ENCODE measurements at regions of chr10 and their contacts with region 1.

Region 1: GRCh38 chr10:95544783-95545500 is 16.2 kb downstream of the SORBS1 start:
- DNase-seq: no peak
- ATAC-seq: peak in 4 of 8 donors; percentile 13 to 36 (median 18)
- H3K4me3 ChIP-seq: peak overlapping the region in 1 of 10 donors; percentile 3
- H3K27ac ChIP-seq: peak overlapping the region; percentile 61 to 92 (median 89)
- H3K4me1 ChIP-seq: peaks cover 24 to 100% (median 88%) of the 10 kb centered on the region in 9 donors
- H3K27me3 ChIP-seq: no peaks in the 10 kb centered on the region
- CTCF ChIP-seq: no peak

Region 2: GRCh38 chr10:95049919-95050318 is 495.0 kb before region 1 on chr10:
- intact Hi-C with region 1: no loop called
- DNase-seq: no peak
- ATAC-seq: no peak
- H3K4me3 ChIP-seq: no peak overlapping the region
- H3K27ac ChIP-seq: no peak overlapping the region
- H3K4me1 ChIP-seq: no peaks in the 10 kb centered on the region
- H3K27me3 ChIP-seq: no peaks in the 10 kb centered on the region
- CTCF ChIP-seq: no peak

Region 3: GRCh38 chr10:95467162-95467599 is 77.8 kb before region 1 on chr10:
- intact Hi-C with region 1: loop called in 2 of 10 experiments (anchors 5 to 10 kb)
- DNase-seq: peak; percentile 47 to 74
- ATAC-seq: peak; percentile 77 to 92 (median 82)
- H3K4me3 ChIP-seq: no peak overlapping the region
- H3K27ac ChIP-seq: peak overlapping the region; percentile 58 to 94 (median 88)
- H3K4me1 ChIP-seq: peaks cover 12 to 96% (median 51%) of the 10 kb centered on the region in 9 donors
- H3K27me3 ChIP-seq: no peaks in the 10 kb centered on the region
- CTCF ChIP-seq: peak in 7 of 9 donors; percentile 7 to 49 (median 18)

Region 4: GRCh38 chr10:95508730-95509129 is 36.2 kb before region 1 on chr10:
- intact Hi-C with region 1: loop called in 2 of 10 experiments (anchors 1 to 10 kb)
- DNase-seq: peak in 1 of 2 donors; percentile 51
- ATAC-seq: peak; percentile 65 to 86 (median 81)
- H3K4me3 ChIP-seq: peak overlapping the region in 6 of 10 donors; percentile 0 to 28 (median 14)
- H3K27ac ChIP-seq: peak overlapping the region; percentile 62 to 90 (median 82)
- H3K4me1 ChIP-seq: peaks cover 26 to 97% (median 82%) of the 10 kb centered on the region in 9 donors
- H3K27me3 ChIP-seq: no peaks in the 10 kb centered on the region
- CTCF ChIP-seq: no peak